ENCODE measurements at regions of chr13 and their contacts with region 1.

Region 1: GRCh38 chr13:74062933-74063332 is 71.3 kb downstream of the KLF12 start:
- DNase-seq: peak; percentile 75
- H3K4me3 Mint-ChIP-seq: peak overlapping the region; percentile 72
- H3K27ac Mint-ChIP-seq: peak overlapping the region; percentile 94
- H3K4me1 Mint-ChIP-seq: peaks cover 84% of the 10 kb centered on the region
- H3K27me3 Mint-ChIP-seq: no peaks in the 10 kb centered on the region

Region 2: GRCh38 chr13:73835138-73835721 is 227.7 kb before region 1 on chr13:
- CTCF ChIA-PET with region 1: no interaction called
- POLR2A ChIA-PET with region 1: no interaction called
- intact Hi-C with region 1: loop called (anchors 5 kb)
- DNase-seq: no peak
- H3K4me3 Mint-ChIP-seq: no peak overlapping the region
- H3K27ac Mint-ChIP-seq: no peak overlapping the region
- H3K4me1 Mint-ChIP-seq: peaks cover 37% of the 10 kb centered on the region
- H3K27me3 Mint-ChIP-seq: no peaks in the 10 kb centered on the region

Region 3: GRCh38 chr13:73938375-73939070 is 124.4 kb before region 1 on chr13:
- CTCF ChIA-PET with region 1: no interaction called
- POLR2A ChIA-PET with region 1: no interaction called
- intact Hi-C with region 1: loop called (anchors 2 kb)
- DNase-seq: no peak
- H3K4me3 Mint-ChIP-seq: no peak overlapping the region
- H3K27ac Mint-ChIP-seq: no peak overlapping the region
- H3K4me1 Mint-ChIP-seq: peaks cover 77% of the 10 kb centered on the region
- H3K27me3 Mint-ChIP-seq: no peaks in the 10 kb centered on the region

Region 4: DNA sequence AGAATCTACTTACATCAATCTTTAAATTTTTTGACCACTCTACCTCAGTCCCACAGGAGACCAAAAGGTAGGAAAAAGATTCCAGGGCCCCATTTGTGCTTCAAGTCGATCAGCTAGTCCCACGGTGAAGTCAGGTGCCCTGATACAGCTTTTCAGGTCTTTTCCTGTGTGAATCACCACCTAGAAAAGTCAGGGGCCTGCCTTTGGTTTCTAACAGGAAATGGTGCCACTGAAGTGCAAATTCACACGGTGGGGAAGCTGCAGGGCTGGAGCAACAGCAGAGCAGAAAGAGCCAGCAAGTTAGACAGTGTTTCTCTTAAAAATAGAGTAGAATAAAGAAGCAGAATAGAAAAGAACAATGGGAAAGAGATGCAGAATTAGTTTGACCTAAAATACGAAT is 36.2 kb before region 1 on chr13:
- CTCF ChIA-PET with region 1: no interaction called
- POLR2A ChIA-PET with region 1: interaction called, 3 read pairs
- intact Hi-C with region 1: loop called (anchors 1 kb)
- DNase-seq: peak; percentile 79
- H3K4me3 Mint-ChIP-seq: peak overlapping the region; percentile 65
- H3K27ac Mint-ChIP-seq: peak overlapping the region; percentile 71
- H3K4me1 Mint-ChIP-seq: peaks cover 78% of the 10 kb centered on the region
- H3K27me3 Mint-ChIP-seq: no peaks in the 10 kb centered on the region

Region 5: GRCh38 chr13:74090869-74091605 is 28.1 kb after region 1 on chr13:
- CTCF ChIA-PET with region 1: interaction called, 3 read pairs
- POLR2A ChIA-PET with region 1: interaction called, 3 read pairs
- intact Hi-C with region 1: loop called (anchors 2 kb)
- DNase-seq: no peak
- H3K4me3 Mint-ChIP-seq: peak overlapping the region; percentile 54
- H3K27ac Mint-ChIP-seq: peak overlapping the region; percentile 83
- H3K4me1 Mint-ChIP-seq: peaks cover 66% of the 10 kb centered on the region
- H3K27me3 Mint-ChIP-seq: no peaks in the 10 kb centered on the region

Region 6: DNA sequence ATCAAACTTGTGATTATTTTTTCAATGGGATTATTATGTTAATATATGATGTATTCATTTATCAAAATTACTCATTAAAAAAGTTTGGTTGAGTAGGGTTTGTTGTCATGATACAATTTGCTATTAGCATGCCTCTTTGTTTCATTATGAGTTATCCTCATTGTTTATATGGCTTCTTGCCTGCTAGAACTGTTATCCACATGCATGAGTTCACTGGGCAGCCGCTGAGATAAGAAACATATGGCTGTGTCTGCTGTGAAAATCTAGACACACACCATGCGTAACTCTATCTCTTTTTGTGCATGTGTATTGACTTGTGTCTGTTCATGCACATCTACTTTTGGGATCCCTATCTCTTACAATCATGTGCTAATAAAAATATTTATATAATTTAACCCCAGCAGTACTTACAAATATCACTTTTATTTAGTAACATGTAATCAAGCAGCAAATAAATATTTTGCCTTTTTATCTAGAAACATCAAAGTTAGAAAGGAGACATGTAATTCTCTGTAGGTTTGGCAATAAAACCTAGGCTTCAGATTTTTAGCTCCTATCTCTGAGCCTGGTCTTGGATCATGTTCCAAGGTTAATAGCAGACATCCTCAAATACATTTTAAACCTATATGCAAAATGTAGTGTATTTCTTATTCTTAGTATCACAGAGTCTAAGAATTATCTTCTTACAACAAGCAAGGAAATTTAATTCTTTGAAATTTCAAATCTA is 82.5 kb after region 1 on chr13:
- CTCF ChIA-PET with region 1: no interaction called
- POLR2A ChIA-PET with region 1: no interaction called
- intact Hi-C with region 1: no loop called
- DNase-seq: no peak
- H3K4me3 Mint-ChIP-seq: no peak overlapping the region
- H3K27ac Mint-ChIP-seq: no peak overlapping the region
- H3K4me1 Mint-ChIP-seq: no peaks in the 10 kb centered on the region
- H3K27me3 Mint-ChIP-seq: no peaks in the 10 kb centered on the region

Region 7: DNA sequence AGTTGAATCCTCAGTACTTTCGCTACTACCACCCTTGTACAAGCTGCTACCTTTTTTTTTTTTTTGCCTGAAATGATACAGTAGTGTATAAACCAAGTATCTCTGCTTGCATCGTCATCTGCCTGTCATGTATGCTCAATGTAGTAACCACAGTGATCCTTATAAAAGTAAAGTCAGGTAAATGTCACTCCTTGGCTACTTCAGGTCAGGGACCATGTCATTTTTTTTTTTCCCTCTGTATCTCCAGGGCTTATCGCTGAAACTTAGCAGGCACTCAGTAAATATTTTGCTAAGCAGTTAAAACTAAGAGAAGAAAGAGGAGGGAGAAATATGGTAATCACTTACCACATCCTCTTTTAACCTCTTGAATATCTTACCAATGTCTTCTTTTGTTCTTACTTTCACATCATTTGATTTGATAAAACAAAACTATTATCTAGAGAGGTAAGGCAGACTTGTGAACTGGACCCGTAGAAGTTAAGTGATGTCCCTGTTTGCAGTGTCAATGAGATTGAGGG is 168.1 kb after region 1 on chr13:
- CTCF ChIA-PET with region 1: no interaction called
- POLR2A ChIA-PET with region 1: no interaction called
- intact Hi-C with region 1: loop called (anchors 2 kb)
- DNase-seq: no peak
- H3K4me3 Mint-ChIP-seq: peak overlapping the region; percentile 31
- H3K27ac Mint-ChIP-seq: peak overlapping the region; percentile 88
- H3K4me1 Mint-ChIP-seq: peaks cover 45% of the 10 kb centered on the region
- H3K27me3 Mint-ChIP-seq: no peaks in the 10 kb centered on the region

Measured in activated CD4-positive, alpha-beta memory T cell treated with anti-CD3 and anti-CD28 coated beads for 36 hours (primary cell).